Activated CD4-positive, alpha-beta T cell treated with anti-CD3 and anti-CD28 coated beads for 36 hours (primary cell): ENCODE measurements at regions of chr11 and their contacts with region 1.

Region 1: GRCh38 chr11:59802639-59803176 is 7.9 kb downstream of the MRPL16 start:
- DNase-seq: peak; percentile 40
- ATAC-seq: peak; percentile 61
- H3K4me3 Mint-ChIP-seq: no peak overlapping the region
- H3K27ac Mint-ChIP-seq: no peak overlapping the region
- H3K4me1 Mint-ChIP-seq: no peaks in the 10 kb centered on the region
- H3K27me3 Mint-ChIP-seq: no peaks in the 10 kb centered on the region

Region 2: DNA sequence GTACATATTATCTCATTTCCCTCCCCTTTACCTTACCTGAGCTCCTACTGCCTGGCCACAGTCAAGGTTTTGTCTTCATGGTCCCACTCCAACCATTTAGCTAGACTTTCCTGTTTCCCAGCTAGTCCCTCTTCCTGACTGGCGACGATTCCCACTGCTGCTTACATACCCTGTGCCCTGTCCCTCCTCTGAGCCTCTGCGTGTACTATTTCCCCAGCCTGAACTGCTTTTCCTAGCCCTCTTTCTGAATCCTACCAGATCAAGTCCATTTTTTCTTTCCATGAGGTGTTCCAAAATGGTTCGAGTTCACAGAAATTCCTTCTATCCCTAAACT is 15.5 kb before region 1 on chr11:
- CTCF ChIA-PET with region 1: interaction called, 11 read pairs
- POLR2A ChIA-PET with region 1: no interaction called
- intact Hi-C with region 1: no loop called
- DNase-seq: no peak
- ATAC-seq: no peak
- H3K4me3 Mint-ChIP-seq: no peak overlapping the region
- H3K27ac Mint-ChIP-seq: no peak overlapping the region
- H3K4me1 Mint-ChIP-seq: no peaks in the 10 kb centered on the region
- H3K27me3 Mint-ChIP-seq: no peaks in the 10 kb centered on the region